ENCODE measurements at regions of chr14 and their contacts with region 1.

Region 1: GRCh38 chr14:24310646-24311604 is at the start of gene LTB4R:
- DNase-seq: peak; percentile 62
- H3K4me3 Mint-ChIP-seq: peak within 1 kb of the TSS; percentile 77
- H3K27ac Mint-ChIP-seq: peak within 1 kb of the TSS; percentile 87
- H3K4me1 Mint-ChIP-seq: peaks cover 81% of the 10 kb centered on the region
- H3K27me3 Mint-ChIP-seq: no peaks in the 10 kb centered on the region
- total RNA-seq, gene LTB4R: 26.6 to 28.3 TPM

Region 2: GRCh38 chr14:24241829-24242443 is 69.0 kb before region 1 on chr14:
- CTCF ChIA-PET with region 1: interaction called, 93 read pairs
- POLR2A ChIA-PET with region 1: interaction called, 3 read pairs
- DNase-seq: peak; percentile 96
- H3K4me3 Mint-ChIP-seq: peak overlapping the region; percentile 95
- H3K27ac Mint-ChIP-seq: peak overlapping the region; percentile 100
- H3K4me1 Mint-ChIP-seq: peaks cover 58% of the 10 kb centered on the region
- H3K27me3 Mint-ChIP-seq: no peaks in the 10 kb centered on the region

Region 3: GRCh38 chr14:24271134-24271833 is 39.6 kb before region 1 on chr14 and contains the start of gene RABGGTA:
- CTCF ChIA-PET with region 1: interaction called, 22 read pairs
- POLR2A ChIA-PET with region 1: no interaction called
- DNase-seq: peak; percentile 91
- H3K4me3 Mint-ChIP-seq: peak within 1 kb of the TSS; percentile 87
- H3K27ac Mint-ChIP-seq: peak within 1 kb of the TSS; percentile 96
- H3K4me1 Mint-ChIP-seq: peaks cover 52% of the 10 kb centered on the region
- H3K27me3 Mint-ChIP-seq: no peaks in the 10 kb centered on the region
- total RNA-seq, gene RABGGTA: 54.8 to 55.0 TPM

Region 4: DNA sequence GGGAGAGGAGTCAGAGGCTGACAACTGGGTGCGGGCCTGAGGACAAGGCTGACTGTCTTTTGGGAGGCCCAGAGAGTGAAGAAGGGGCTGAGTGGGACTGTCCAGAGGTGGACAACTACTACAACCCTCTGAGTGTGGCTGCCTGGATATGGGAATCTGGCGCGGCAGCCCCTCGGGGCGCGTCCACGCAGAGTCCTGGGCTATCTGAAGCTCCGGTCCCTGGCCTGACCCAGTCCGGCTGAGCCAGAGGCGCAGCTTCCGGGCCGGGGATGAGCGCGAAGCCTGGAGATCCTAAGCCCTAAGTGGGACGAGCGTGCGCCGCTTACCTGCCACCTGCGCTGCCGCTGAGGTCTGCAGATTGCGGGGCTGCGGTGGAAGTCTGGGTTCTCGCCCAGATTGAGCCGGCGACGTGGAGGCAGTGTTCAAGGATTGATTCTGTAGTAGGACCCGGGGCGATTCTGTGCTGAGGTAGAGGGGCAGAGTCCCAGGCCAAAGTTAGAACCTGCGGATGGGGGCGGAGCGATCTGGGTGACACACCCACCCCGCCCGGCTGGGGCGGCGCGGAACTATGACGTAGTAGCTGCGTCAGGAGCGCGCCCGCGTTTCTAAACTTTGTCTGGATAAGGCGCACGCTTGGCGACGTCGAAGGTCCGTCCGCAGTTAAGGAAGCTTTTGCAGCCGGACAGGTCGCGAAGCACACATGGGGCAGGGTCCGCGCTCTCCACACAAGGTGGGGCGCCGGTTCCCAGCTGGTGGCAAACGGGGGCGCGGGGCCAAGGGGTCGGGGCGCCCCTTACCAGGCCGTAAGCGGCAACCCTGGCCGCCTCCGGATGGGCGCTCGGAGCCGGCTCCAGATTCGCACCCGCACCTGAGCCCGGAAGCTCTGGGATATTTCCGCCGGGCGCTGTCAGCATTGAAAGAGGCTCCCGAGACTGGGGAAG is 11.4 kb before region 1 on chr14 and contains the starts of genes DHRS1 and NOP9:
- CTCF ChIA-PET with region 1: interaction called, 111 read pairs
- POLR2A ChIA-PET with region 1: interaction called, 4 read pairs
- DNase-seq: peak; percentile 92
- H3K4me3 Mint-ChIP-seq: peak within 1 kb of the TSS; percentile 89
- H3K27ac Mint-ChIP-seq: peak within 1 kb of the TSS; percentile 93
- H3K4me1 Mint-ChIP-seq: peaks cover 53% of the 10 kb centered on the region
- H3K27me3 Mint-ChIP-seq: no peaks in the 10 kb centered on the region
- total RNA-seq, gene DHRS1: 31.7 to 35.0 TPM
- total RNA-seq, gene NOP9: 30.8 to 35.2 TPM